ENCODE measurements at regions of chr1 and their contacts with region 1.

Region 1: GRCh38 chr1:35539073-35539823 is 18.0 kb downstream of the KIAA0319L start:
- DNase-seq: peak; percentile 48
- ATAC-seq: peak; percentile 76
- H3K4me3 Mint-ChIP-seq: peak overlapping the region; percentile 45
- H3K27ac Mint-ChIP-seq: peak overlapping the region; percentile 92
- H3K4me1 Mint-ChIP-seq: peaks cover 87% of the 10 kb centered on the region
- H3K27me3 Mint-ChIP-seq: no peaks in the 10 kb centered on the region

Region 2: GRCh38 chr1:35261412-35262105 is 277.7 kb before region 1 on chr1:
- CTCF ChIA-PET with region 1: no interaction called
- POLR2A ChIA-PET with region 1: interaction called, 13 read pairs
- intact Hi-C with region 1: no loop called
- DNase-seq: no peak
- ATAC-seq: no peak
- H3K4me3 Mint-ChIP-seq: no peak overlapping the region
- H3K27ac Mint-ChIP-seq: no peak overlapping the region
- H3K4me1 Mint-ChIP-seq: no peaks in the 10 kb centered on the region
- H3K27me3 Mint-ChIP-seq: peaks cover 2% of the 10 kb centered on the region

Region 3: GRCh38 chr1:35505908-35506798 is 33.1 kb before region 1 on chr1:
- CTCF ChIA-PET with region 1: interaction called, 5 read pairs
- POLR2A ChIA-PET with region 1: interaction called, 5 read pairs
- intact Hi-C with region 1: loop called (anchors 1 to 2 kb)
- DNase-seq: peak; percentile 62
- ATAC-seq: peak; percentile 80
- H3K4me3 Mint-ChIP-seq: peak overlapping the region; percentile 26
- H3K27ac Mint-ChIP-seq: peak overlapping the region; percentile 81
- H3K4me1 Mint-ChIP-seq: peaks cover 61% of the 10 kb centered on the region
- H3K27me3 Mint-ChIP-seq: no peaks in the 10 kb centered on the region